ENCODE measurements at regions of chr15 and their contacts with region 1.

Region 1: GRCh38 chr15:99361541-99362185 is 110.4 kb downstream of the LRRC28 start:
- DNase-seq: no peak
- ATAC-seq: no peak
- H3K4me3 ChIP-seq: no peak overlapping the region
- H3K4me1 ChIP-seq: no peaks in the 10 kb centered on the region
- CTCF ChIP-seq: peak; percentile 7

Region 2: GRCh38 chr15:99424978-99425656 is 63.5 kb after region 1 on chr15:
- intact Hi-C with region 1: loop called in 1 of 2 experiments (anchors 10 kb)
- DNase-seq: peak in 1 of 3 donors; percentile 53
- ATAC-seq: peak; percentile 17
- H3K4me3 ChIP-seq: no peak overlapping the region
- H3K4me1 ChIP-seq: no peaks in the 10 kb centered on the region
- CTCF ChIP-seq: no peak